Stomach (tissue), 19 donors: ENCODE measurements at regions of chr12 and their contacts with region 1.

Region 1: DNA sequence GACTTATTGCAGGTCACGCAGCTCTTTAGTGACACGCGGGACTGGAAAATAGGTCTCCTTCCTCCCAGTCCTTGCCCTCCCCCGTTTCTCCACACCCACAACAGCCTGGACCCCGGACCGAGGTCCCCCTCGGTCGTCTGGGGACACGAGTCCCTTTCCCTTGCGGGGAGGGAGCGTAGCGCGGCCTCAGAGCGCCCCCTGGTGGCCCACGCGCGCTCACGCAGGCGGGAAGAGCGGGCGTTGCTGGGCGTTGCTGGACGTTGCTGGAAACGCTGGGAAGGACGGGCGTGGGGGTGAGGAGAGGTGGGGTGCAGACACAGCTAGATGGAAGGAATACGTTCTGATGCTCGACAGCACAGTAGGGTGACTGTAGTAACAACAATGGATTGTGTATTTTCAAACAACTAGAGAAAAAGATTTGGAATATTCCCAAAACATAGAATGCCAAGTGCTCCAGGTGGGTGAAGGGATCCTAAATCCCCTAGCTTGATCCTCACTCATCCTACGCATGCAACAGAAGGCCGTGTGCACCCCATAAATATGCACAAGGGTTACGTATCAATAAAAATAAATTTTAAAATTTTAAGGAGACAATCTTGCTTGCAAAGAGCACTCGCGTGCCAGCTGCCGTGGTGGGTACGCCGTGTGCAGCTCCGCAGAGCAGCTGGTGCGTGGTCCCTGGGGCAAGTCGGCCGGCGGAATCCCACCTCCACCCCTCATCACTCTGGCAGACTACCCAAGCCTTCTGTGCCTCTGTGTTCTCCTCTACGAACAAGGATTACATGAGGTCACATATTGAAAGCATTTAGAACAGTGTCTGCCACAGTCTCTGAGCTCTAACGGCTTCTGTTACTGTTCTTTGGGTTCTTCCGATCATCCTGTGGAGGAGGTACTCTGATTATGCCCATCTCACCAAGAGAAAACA is 87.4 kb downstream of the B4GALNT3 start:
- DNase-seq: peak; percentile 75 to 90
- H3K4me3 ChIP-seq: peak overlapping the region in 1 of 4 donors; percentile 14
- H3K27ac ChIP-seq: no peak overlapping the region
- H3K4me1 ChIP-seq: peaks cover 3 to 22% (median 14%) of the 10 kb centered on the region in 4 donors
- H3K27me3 ChIP-seq: peaks cover 0 to 44% (median 7%) of the 10 kb centered on the region in 3 donors
- CTCF ChIP-seq: peak in 6 of 7 experiments; percentile 97 to 100 (median 98)
- EP300 ChIP-seq: no peak
- POLR2A ChIP-seq: no peak

Region 2: GRCh38 chr12:442235-442884 is 104.8 kb before region 1 on chr12:
- intact Hi-C with region 1: loop called (anchors 5 kb)
- DNase-seq: peak; percentile 69 to 76
- H3K4me3 ChIP-seq: no peak overlapping the region
- H3K27ac ChIP-seq: no peak overlapping the region
- H3K4me1 ChIP-seq: no peaks in the 10 kb centered on the region
- H3K27me3 ChIP-seq: no peaks in the 10 kb centered on the region
- CTCF ChIP-seq: peak in 5 of 7 experiments; percentile 63 to 78 (median 71)
- EP300 ChIP-seq: no peak
- POLR2A ChIP-seq: no peak